ENCODE measurements at regions of chr7 and their contacts with region 1.

Region 1: GRCh38 chr7:29177963-29178600 is 16.5 kb upstream of the CHN2 start:
- DNase-seq: peak in 1 of 35 experiments; percentile 36
- ATAC-seq: peak in 3 of 4 experiments; percentile 23 to 32 (median 29)
- H3K4me3 ChIP-seq: no peak overlapping the region
- H3K4me3 Mint-ChIP-seq: no peak overlapping the region
- H3K27ac ChIP-seq: no peak overlapping the region
- H3K27ac Mint-ChIP-seq: no peak overlapping the region
- H3K4me1 ChIP-seq: no peaks in the 10 kb centered on the region
- H3K4me1 Mint-ChIP-seq: peaks cover 4 to 8% (median 5%) of the 10 kb centered on the region in 3 donors
- H3K27me3 ChIP-seq: peaks cover 0 to 2% of the 10 kb centered on the region in 2 experiments
- H3K27me3 Mint-ChIP-seq: peaks cover 4% of the 10 kb centered on the region in 2 donors

Region 2: DNA sequence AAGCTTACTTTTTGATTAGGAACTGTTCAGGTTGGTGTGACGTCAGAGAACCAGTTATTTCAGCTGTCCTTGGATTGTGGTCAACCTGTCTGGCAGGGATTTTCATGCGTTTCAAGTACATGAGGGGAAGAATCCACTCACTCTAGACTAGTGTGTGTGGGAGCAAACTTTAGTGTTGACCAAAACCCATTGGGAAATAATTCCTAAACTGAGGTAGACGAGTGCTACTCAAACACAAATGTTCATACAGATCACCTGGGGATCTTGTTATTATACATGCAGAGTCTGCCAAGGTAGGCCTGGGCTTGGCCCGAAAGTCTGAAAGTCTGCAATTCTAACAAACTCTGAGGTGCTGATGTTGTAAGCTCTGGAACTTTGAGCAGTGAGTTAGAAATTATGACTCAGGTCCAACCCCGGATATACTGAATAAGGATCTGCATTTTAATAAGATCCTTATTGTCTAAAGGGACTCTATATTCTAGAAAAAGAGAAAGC is 876.9 kb before region 1 on chr7:
- CTCF ChIA-PET with region 1: no interaction called
- POLR2A ChIA-PET with region 1: interaction called in 1 of 2 experiments, 11 read pairs
- DNase-seq: no peak
- ATAC-seq: no peak
- H3K4me3 ChIP-seq: no peak overlapping the region
- H3K4me3 Mint-ChIP-seq: no peak overlapping the region
- H3K27ac ChIP-seq: no peak overlapping the region
- H3K27ac Mint-ChIP-seq: no peak overlapping the region
- H3K4me1 ChIP-seq: no peaks in the 10 kb centered on the region
- H3K4me1 Mint-ChIP-seq: no peaks in the 10 kb centered on the region
- H3K27me3 ChIP-seq: no peaks in the 10 kb centered on the region
- H3K27me3 Mint-ChIP-seq: peaks cover 0 to 1% of the 10 kb centered on the region in 2 donors